GM12878 (cell line): ENCODE measurements at regions of chr11 and their contacts with region 1.

Region 1: DNA sequence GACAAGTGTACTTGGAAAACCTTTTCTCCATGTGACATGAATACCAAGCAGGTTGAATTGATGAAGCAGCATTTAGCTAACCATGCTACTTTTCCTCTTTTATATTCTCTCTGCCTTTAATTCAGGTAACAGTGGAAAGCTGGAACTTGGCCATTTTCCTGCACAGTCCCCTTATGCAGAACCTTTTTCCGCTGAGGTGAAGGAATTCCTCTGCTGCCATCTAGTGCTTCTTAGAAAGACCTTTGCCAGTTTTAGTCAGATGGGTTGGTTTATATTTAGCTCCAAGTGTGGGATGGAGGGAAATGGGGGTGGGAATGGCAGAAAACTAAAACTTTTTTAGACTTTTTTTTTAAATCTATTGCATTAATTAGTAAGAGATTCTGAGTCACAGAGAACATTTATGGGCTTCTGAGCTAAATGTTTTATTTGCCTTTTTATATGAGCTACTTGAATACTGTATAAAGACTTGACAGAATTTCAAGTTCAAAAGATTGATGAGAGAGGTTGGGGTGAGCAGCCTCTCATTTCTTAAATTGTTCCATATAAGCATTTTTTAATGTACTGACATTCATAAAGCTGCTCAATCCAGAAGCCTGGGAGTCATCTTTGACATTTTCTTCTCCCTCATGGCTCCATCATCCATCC is 153.9 kb upstream of the ZC3H12C start:
- DNase-seq: no peak
- ATAC-seq: peak; percentile 82
- H3K4me3 ChIP-seq: no peak overlapping the region
- H3K27ac ChIP-seq: no peak overlapping the region
- H3K4me1 ChIP-seq: no peaks in the 10 kb centered on the region
- H3K27me3 ChIP-seq: no peaks in the 10 kb centered on the region; a peak in 1 of 4 replicates
- CTCF ChIP-seq: peak; percentile 49 to 85 (median 60)
- EP300 ChIP-seq: no peak
- POLR2A ChIP-seq: no peak
- RAD21 ChIP-seq: peak; percentile 97

Region 2: DNA sequence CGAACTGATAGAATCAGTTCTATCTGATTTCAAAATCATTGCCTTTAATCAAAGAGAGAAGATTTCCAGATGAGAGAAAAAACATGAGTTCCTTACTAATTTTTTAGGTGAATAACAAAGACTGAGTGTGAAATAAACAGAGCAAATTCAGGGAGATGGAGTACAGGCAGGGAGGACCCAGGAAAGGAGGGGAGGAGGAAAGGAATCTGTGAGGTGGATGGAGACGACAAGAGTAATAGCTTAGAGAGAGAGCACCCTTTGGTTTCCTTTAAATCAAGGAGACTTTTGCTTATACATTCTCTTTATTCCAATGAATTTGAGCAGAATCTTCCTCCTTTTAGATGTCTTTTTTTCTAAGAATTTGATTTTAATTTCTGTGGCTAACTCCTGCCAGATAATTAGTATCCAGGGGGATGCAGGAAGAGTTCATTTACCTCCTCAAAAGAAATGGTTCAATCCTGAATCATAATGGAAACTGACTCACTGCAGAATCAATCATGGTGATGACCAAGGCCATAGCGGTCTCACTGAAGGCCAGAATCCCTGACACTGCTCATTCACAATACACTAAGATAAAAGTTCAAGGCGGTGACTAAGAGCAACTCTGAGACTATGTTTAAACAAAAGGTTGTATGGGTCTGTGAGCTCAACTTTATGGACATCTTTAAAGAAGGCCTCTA is 80.1 kb before region 1 on chr11:
- CTCF ChIA-PET with region 1: interaction called, 140 read pairs
- POLR2A ChIA-PET with region 1: interaction called, 3 read pairs
- RAD21 ChIA-PET with region 1: interaction called, 64 read pairs
- SMC1A ChIA-PET with region 1: interaction called, 127 read pairs
- in situ Hi-C with region 1: loop called (anchors 5 kb)
- intact Hi-C with region 1: no loop called
- DNase-seq: no peak
- ATAC-seq: no peak
- H3K4me3 ChIP-seq: no peak overlapping the region
- H3K27ac ChIP-seq: no peak overlapping the region
- H3K4me1 ChIP-seq: peaks cover 6% of the 10 kb centered on the region
- H3K27me3 ChIP-seq: no peaks in the 10 kb centered on the region
- CTCF ChIP-seq: no peak
- EP300 ChIP-seq: no peak
- POLR2A ChIP-seq: no peak
- RAD21 ChIP-seq: no peak

Region 3: GRCh38 chr11:109864834-109865547 is 74.3 kb before region 1 on chr11:
- CTCF ChIA-PET with region 1: interaction called, 140 read pairs
- POLR2A ChIA-PET with region 1: interaction called, 3 read pairs
- RAD21 ChIA-PET with region 1: interaction called, 40 read pairs
- SMC1A ChIA-PET with region 1: interaction called, 127 read pairs
- in situ Hi-C with region 1: loop called (anchors 5 kb)
- intact Hi-C with region 1: no loop called
- DNase-seq: no peak
- ATAC-seq: peak; percentile 54
- H3K4me3 ChIP-seq: no peak overlapping the region
- H3K27ac ChIP-seq: no peak overlapping the region; the same call in 1 of the 2 replicates
- H3K4me1 ChIP-seq: peaks cover 19% of the 10 kb centered on the region
- H3K27me3 ChIP-seq: no peaks in the 10 kb centered on the region
- CTCF ChIP-seq: no peak
- EP300 ChIP-seq: no peak
- POLR2A ChIP-seq: no peak
- RAD21 ChIP-seq: no peak

Region 4: DNA sequence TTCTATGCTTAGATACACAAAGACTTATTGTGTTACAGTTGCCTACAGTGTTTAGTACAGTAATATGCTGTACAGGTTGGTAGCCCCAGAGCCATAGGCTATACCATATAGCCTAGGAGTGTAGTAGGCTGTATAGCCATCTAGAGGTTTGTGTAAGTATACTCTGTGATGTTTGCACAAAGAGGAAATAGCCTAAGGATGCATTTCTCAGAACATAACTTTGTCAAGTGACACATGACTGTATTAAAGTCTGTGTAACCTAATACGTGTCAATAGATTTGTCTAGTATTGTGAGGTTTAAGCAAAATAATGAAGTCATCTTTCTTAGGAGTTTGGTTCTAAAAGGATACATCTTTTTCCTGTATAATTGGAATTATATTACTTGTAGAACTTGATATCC is 159.4 kb after region 1 on chr11:
- CTCF ChIA-PET with region 1: interaction called, 14 read pairs
- POLR2A ChIA-PET with region 1: no interaction called
- RAD21 ChIA-PET with region 1: interaction called, 37 read pairs
- SMC1A ChIA-PET with region 1: interaction called, 14 read pairs
- in situ Hi-C with region 1: no loop called
- intact Hi-C with region 1: no loop called
- DNase-seq: no peak
- ATAC-seq: peak; percentile 78
- H3K4me3 ChIP-seq: no peak overlapping the region
- H3K27ac ChIP-seq: no peak overlapping the region
- H3K4me1 ChIP-seq: peaks cover 11% of the 10 kb centered on the region; the same call in 1 of the 2 replicates
- H3K27me3 ChIP-seq: no peaks in the 10 kb centered on the region
- CTCF ChIP-seq: peak; percentile 23 to 41 (median 25); a peak in 3 of 6 replicates
- EP300 ChIP-seq: peak in 1 of 2 experiments; percentile 30; a peak in 1 of 4 replicates
- POLR2A ChIP-seq: no peak
- RAD21 ChIP-seq: peak; percentile 57